ENCODE measurements at regions of chr1 and their contacts with region 1.

Region 1: DNA sequence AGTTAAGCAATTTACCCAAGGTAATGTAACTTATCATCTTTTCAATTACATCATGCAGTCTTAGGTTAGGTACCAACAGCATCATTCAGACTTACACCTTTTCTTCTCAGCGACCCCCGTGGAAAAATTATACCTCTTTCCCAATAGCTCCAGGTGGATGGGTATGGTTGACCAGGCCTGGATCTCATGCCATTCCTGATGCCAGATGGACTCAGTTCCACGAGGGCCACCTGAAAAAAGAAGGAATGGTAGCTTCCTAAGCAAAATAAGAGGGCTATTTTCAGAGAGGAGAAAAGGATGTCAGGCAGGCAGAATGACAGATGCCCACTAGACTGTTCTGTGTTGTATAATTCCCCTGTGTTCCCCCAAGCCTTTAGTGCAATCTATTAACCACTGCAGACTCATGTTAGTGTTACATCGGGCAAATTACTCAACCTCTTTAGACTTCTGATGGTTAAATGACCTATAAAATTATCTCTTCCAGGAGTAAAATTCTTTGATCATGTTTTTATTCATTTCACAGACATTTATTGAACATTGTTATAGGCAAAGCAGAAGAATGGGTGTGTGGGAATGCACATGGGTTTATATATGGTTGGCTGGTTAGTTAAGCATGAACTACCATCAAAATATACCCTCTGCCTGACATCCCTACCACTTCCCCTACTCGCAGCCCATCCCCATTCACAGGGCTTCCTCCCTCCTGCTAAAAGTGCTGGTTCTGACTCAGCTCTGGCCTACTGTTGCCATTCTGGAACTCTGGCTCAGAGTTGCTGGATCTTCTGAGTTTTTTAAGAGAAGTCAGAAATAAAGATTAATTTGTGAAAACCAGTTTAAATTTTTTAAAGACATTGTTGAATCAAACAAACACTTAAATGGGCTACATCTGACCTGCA is 10.6 kb upstream of the MYSM1 start:
- DNase-seq: no peak
- CTCF ChIP-seq: no peak

Region 2: GRCh38 chr1:58618303-58618702 is 92.1 kb before region 1 on chr1:
- CTCF ChIA-PET with region 1: no interaction called
- POLR2A ChIA-PET with region 1: no interaction called
- DNase-seq: no peak
- CTCF ChIP-seq: no peak

Region 3: GRCh38 chr1:58722967-58723366 is 12.5 kb after region 1 on chr1:
- CTCF ChIA-PET with region 1: interaction called, 17 read pairs
- POLR2A ChIA-PET with region 1: interaction called, 6 read pairs
- DNase-seq: no peak
- CTCF ChIP-seq: no peak

Region 4: GRCh38 chr1:58932859-58933598 is 222.6 kb after region 1 on chr1:
- CTCF ChIA-PET with region 1: no interaction called
- POLR2A ChIA-PET with region 1: no interaction called
- DNase-seq: no peak
- CTCF ChIP-seq: no peak

Measured in GM10248 (cell line).